ENCODE measurements at regions of chr15 and their contacts with region 1.

Region 1: GRCh38 chr15:73950831-73951561 is 24.7 kb downstream of the LOXL1 start:
- DNase-seq: peak; percentile 95
- ATAC-seq: peak; percentile 97

Region 2: DNA sequence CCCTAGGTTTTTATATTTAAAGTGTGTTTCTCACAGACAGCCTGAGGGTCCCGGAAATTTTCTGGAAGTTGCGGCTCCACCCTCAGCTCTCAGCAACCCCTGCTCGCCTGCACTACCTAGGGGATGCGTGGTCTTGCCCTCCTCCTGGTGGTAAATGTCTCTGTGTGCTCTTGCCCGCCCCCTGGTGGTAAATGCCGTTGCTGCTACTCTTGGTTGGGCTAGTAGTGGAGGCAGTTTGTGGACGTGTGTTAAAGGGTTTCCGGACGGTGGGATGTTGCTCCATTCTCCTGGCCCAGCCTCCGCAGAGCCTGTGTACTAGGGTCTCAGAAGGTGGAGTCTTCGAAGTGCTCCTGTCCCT is 13.7 kb after region 1 on chr15:
- intact Hi-C with region 1: loop called (anchors 1 kb)
- DNase-seq: peak; percentile 86
- ATAC-seq: peak; percentile 93

Region 3: DNA sequence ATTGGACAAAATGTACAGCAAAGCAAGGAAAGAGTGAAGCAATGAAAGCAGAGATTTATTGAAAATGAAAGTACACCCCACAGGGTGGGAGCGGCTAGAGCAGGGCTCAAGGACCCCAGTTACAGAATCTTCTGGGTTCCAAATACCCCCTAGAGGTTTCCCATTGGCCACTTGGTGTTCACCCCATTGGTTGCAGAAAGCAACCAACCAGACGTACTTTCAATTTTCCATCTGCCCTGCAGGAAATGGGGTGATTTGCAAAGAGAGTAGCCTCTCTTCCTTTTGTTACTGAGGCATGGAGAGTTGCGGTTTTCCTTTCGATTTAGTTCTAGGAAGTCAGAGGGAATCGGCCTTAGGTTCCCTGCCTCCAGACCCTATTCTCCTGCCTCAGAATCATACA is 45.9 kb after region 1 on chr15:
- intact Hi-C with region 1: no loop called
- DNase-seq: no peak
- ATAC-seq: no peak